ENCODE measurements at regions of chr2 and their contacts with region 1.

Region 1: DNA sequence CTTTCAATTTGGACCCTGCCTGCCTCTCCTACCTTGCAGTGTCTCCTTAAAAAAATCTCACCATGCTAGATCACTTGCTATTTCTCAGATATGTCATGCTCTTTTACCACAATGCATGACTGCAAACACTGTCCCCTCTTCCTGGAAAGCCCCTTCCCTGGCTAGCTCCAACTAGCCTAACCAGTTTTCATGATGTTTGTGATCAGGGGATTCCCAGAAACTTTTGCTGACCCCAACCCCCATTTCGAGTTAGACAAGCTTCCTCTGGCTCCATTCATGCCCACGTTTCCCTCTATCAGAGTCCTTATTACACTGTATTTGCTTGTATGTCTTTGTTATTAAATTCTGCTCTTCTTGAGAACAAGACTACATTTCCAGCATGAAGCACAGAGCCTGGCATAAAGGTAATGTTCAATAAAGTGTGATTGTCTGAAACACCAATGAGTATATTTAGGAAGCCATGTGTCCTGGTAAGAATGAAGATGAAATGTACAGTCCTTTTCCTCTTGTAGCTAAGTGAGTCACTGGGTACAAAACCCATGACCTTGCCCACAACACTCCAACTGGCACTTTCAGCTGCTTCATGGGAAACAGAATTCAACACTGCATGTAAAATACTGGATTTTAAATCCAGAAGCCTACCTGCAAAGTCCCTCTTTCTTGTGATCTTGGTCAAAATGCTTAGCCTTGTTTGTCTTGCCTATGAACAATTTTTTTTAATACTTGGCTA is 62.0 kb upstream of the ATL2 start:
- DNase-seq: peak; percentile 76
- ATAC-seq: peak; percentile 94
- H3K4me3 ChIP-seq: no peak overlapping the region
- H3K27ac ChIP-seq: peak overlapping the region; percentile 84
- H3K4me1 ChIP-seq: peaks cover 16% of the 10 kb centered on the region
- H3K27me3 ChIP-seq: no peaks in the 10 kb centered on the region
- CTCF ChIP-seq: no peak
- EP300 ChIP-seq: peak; percentile 73 to 75; a peak in 3 of 4 replicates
- POLR2A ChIP-seq: no peak
- RAD21 ChIP-seq: no peak; the same call in 1 of the 2 replicates

Region 2: GRCh38 chr2:38417745-38418689 is 21.0 kb before region 1 on chr2:
- CTCF ChIA-PET with region 1: interaction called, 4 read pairs
- POLR2A ChIA-PET with region 1: interaction called, 6 read pairs
- RAD21 ChIA-PET with region 1: interaction called, 6 read pairs
- SMC1A ChIA-PET with region 1: interaction called, 13 read pairs
- in situ Hi-C with region 1: no loop called
- intact Hi-C with region 1: no loop called
- DNase-seq: no peak
- ATAC-seq: no peak
- H3K4me3 ChIP-seq: no peak overlapping the region
- H3K27ac ChIP-seq: no peak overlapping the region
- H3K4me1 ChIP-seq: peaks cover 16% of the 10 kb centered on the region
- H3K27me3 ChIP-seq: no peaks in the 10 kb centered on the region
- CTCF ChIP-seq: no peak
- EP300 ChIP-seq: no peak
- POLR2A ChIP-seq: no peak
- RAD21 ChIP-seq: no peak

Region 3: GRCh38 chr2:38465789-38466127 is 26.7 kb after region 1 on chr2:
- CTCF ChIA-PET with region 1: no interaction called
- POLR2A ChIA-PET with region 1: no interaction called
- RAD21 ChIA-PET with region 1: interaction called, 4 read pairs
- SMC1A ChIA-PET with region 1: interaction called, 10 read pairs
- in situ Hi-C with region 1: no loop called
- intact Hi-C with region 1: no loop called
- DNase-seq: no peak
- ATAC-seq: peak; percentile 94
- H3K4me3 ChIP-seq: no peak overlapping the region
- H3K27ac ChIP-seq: no peak overlapping the region
- H3K4me1 ChIP-seq: no peaks in the 10 kb centered on the region
- H3K27me3 ChIP-seq: no peaks in the 10 kb centered on the region
- CTCF ChIP-seq: peak; percentile 68 to 76 (median 68)
- EP300 ChIP-seq: no peak
- POLR2A ChIP-seq: no peak
- RAD21 ChIP-seq: peak; percentile 82

Region 4: GRCh38 chr2:38474715-38475566 is 35.9 kb after region 1 on chr2:
- CTCF ChIA-PET with region 1: interaction called, 3 read pairs
- POLR2A ChIA-PET with region 1: no interaction called
- RAD21 ChIA-PET with region 1: interaction called, 10 read pairs
- SMC1A ChIA-PET with region 1: interaction called, 10 read pairs
- in situ Hi-C with region 1: no loop called
- intact Hi-C with region 1: no loop called
- DNase-seq: no peak
- ATAC-seq: peak; percentile 57
- H3K4me3 ChIP-seq: no peak overlapping the region
- H3K27ac ChIP-seq: no peak overlapping the region
- H3K4me1 ChIP-seq: peaks cover 16% of the 10 kb centered on the region
- H3K27me3 ChIP-seq: no peaks in the 10 kb centered on the region
- CTCF ChIP-seq: no peak
- EP300 ChIP-seq: no peak
- POLR2A ChIP-seq: no peak
- RAD21 ChIP-seq: no peak

Region 5: DNA sequence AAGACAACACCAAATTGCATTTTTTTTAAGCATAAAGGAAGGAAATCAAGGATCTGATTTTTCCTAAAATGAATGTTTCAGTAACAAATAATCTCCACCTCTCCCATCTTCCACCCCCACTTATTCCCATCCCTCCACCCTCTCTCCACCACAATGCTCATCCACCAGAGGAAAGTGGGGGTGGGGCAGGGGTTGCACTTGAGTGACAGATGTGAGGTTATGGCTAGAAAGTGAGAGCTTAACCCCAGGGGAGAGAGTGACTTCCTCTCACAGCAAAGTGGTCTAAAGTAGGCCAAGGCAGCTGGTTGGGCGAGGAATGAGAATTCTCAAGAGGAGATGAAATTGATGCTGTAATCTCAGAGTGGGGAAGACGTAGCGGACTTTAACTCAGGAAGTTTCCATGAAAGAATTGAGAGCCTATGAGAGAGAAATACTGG is 59.0 kb after region 1 on chr2:
- CTCF ChIA-PET with region 1: no interaction called
- POLR2A ChIA-PET with region 1: no interaction called
- RAD21 ChIA-PET with region 1: no interaction called
- SMC1A ChIA-PET with region 1: no interaction called
- in situ Hi-C with region 1: no loop called
- intact Hi-C with region 1: no loop called
- DNase-seq: no peak
- ATAC-seq: peak; percentile 54
- H3K4me3 ChIP-seq: no peak overlapping the region
- H3K27ac ChIP-seq: no peak overlapping the region
- H3K4me1 ChIP-seq: peaks cover 7% of the 10 kb centered on the region
- H3K27me3 ChIP-seq: no peaks in the 10 kb centered on the region
- CTCF ChIP-seq: no peak
- EP300 ChIP-seq: no peak
- POLR2A ChIP-seq: no peak
- RAD21 ChIP-seq: no peak